ENCODE measurements at regions of chr5 and their contacts with region 1.

Region 1: DNA sequence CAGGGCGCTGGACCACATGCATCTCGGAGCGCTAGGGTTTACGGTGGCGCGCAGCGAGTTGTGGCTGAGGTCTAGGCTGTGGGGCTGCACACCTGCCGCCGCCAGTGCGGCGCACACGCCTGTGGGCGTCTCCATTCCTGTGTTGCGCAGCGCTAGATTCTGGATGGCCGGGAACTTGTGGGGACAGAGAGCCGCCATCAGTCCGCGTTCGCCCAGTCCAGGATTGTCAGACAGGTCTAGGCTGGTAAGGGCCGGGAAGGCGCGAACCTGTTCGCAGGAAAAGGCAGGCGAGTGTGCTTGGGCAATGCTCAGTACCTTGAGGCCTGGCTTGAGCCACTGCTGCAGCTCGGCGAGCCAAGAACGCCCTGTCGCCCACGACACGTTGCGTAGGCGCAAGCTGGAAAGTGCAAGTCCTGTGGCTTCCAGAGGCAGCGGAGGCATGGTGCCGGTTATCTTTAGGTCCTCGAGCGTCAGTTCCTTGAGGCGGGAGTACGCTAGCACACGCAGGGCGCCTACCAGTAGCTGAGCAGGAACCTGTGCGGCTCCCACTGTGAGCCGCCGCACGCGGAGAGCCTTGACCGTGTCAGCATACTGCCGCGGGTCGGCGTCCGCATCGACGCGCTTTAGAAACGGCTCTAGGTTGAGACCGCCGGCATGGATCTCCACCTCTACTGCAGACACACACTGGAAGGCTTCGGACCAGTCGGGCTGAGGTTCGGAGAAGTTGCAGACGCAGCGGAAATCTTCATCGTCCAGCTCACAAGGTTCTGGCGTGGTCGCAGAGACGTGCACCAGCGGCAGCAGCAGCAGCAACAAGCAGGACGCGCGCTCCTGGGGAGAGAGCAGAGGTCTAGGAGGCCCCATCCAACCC is 590 bp downstream of the CD14 start:
- DNase-seq: peak; percentile 58 to 59
- H3K4me3 ChIP-seq: peak overlapping the region; percentile 49
- H3K4me3 Mint-ChIP-seq: peak overlapping the region; percentile 88
- H3K27ac Mint-ChIP-seq: peak overlapping the region; percentile 79
- H3K4me1 ChIP-seq: peaks cover 11% of the 10 kb centered on the region
- H3K4me1 Mint-ChIP-seq: peaks cover 7% of the 10 kb centered on the region
- H3K27me3 ChIP-seq: no peaks in the 10 kb centered on the region
- H3K27me3 Mint-ChIP-seq: no peaks in the 10 kb centered on the region
- CTCF ChIP-seq: no peak

Region 2: GRCh38 chr5:140469259-140469658 is 163.1 kb before region 1 on chr5:
- CTCF ChIA-PET with region 1: no interaction called
- POLR2A ChIA-PET with region 1: interaction called, 21 read pairs
- intact Hi-C with region 1: no loop called
- DNase-seq: no peak
- H3K4me3 ChIP-seq: no peak overlapping the region
- H3K4me3 Mint-ChIP-seq: no peak overlapping the region
- H3K27ac Mint-ChIP-seq: no peak overlapping the region
- H3K4me1 ChIP-seq: no peaks in the 10 kb centered on the region
- H3K4me1 Mint-ChIP-seq: no peaks in the 10 kb centered on the region
- H3K27me3 ChIP-seq: no peaks in the 10 kb centered on the region
- H3K27me3 Mint-ChIP-seq: no peaks in the 10 kb centered on the region
- CTCF ChIP-seq: no peak

Region 3: GRCh38 chr5:140547508-140548299 is 84.7 kb before region 1 on chr5 and contains the start of gene EIF4EBP3:
- CTCF ChIA-PET with region 1: interaction called, 5 read pairs
- POLR2A ChIA-PET with region 1: no interaction called
- intact Hi-C with region 1: loop called (anchors 1 kb)
- DNase-seq: peak; percentile 97
- H3K4me3 ChIP-seq: peak within 1 kb of the TSS; percentile 38
- H3K4me3 Mint-ChIP-seq: peak within 1 kb of the TSS; percentile 69
- H3K27ac Mint-ChIP-seq: peak within 1 kb of the TSS; percentile 88
- H3K4me1 ChIP-seq: peaks cover 13% of the 10 kb centered on the region
- H3K4me1 Mint-ChIP-seq: peaks cover 19% of the 10 kb centered on the region
- H3K27me3 ChIP-seq: no peaks in the 10 kb centered on the region
- H3K27me3 Mint-ChIP-seq: no peaks in the 10 kb centered on the region
- CTCF ChIP-seq: peak; percentile 37 to 48
- total RNA-seq, gene EIF4EBP3: 7.6 and 8.0 TPM in 2 replicates

Region 4: DNA sequence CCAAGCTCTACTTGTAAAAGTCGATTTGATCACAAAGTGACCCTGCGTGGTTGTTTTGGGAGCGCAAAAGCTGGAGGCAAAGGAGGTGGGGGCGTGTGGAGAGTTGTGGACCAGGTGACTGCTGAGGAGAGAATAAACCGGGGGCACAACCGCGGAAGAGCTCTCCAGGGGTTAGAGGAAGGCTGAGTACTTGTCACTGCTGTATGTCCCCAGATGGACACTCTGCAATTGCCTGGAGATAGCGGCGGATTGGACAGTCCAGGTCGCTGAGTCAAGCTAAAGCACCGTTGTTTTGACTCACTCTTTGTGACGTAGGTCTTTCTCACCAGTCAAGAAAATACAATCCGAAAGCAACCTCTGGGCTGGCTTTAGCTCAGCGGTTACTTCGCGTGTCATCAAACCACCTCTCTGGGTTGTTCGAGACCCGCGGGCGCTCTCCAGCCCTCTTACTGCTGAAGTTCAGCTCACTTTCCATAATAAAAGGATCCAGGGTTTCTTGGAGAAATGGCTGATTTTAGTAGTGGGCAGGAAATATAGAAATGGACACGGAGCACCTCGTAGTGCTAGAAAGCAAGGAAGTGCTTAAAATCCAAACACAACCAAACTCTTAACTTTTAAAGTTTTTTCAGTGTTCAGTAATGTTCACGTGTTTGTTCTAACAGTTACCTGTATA is 93.5 kb after region 1 on chr5:
- CTCF ChIA-PET with region 1: no interaction called
- POLR2A ChIA-PET with region 1: no interaction called
- intact Hi-C with region 1: no loop called
- DNase-seq: peak; percentile 84 to 87
- H3K4me3 ChIP-seq: peak overlapping the region; percentile 8
- H3K4me3 Mint-ChIP-seq: peak overlapping the region; percentile 74
- H3K27ac Mint-ChIP-seq: peak overlapping the region; percentile 89
- H3K4me1 ChIP-seq: no peaks in the 10 kb centered on the region
- H3K4me1 Mint-ChIP-seq: no peaks in the 10 kb centered on the region
- H3K27me3 ChIP-seq: no peaks in the 10 kb centered on the region
- H3K27me3 Mint-ChIP-seq: no peaks in the 10 kb centered on the region
- CTCF ChIP-seq: no peak

Region 5: DNA sequence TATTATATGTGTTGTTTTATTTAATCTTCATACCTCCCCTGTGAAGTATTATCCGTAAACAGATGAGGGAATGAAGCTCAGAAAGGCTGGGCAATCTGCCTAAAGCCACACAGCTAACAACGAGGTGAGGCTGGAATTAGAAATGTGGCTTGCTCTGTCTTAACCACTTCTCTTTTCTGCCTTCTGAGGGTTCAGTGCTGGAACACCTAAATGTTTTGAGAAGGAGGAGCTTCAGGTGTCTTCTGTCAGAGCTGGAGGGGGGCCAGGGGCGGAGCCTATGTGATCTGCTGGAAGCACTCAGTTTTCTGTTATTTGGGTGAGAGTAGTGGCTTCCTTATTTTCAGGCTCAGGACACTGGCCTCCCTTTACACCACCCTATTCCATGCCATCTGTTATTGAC is 1084.7 kb after region 1 on chr5:
- CTCF ChIA-PET with region 1: no interaction called
- POLR2A ChIA-PET with region 1: no interaction called
- intact Hi-C with region 1: no loop called
- DNase-seq: no peak
- H3K4me3 ChIP-seq: no peak overlapping the region
- H3K4me3 Mint-ChIP-seq: no peak overlapping the region
- H3K27ac Mint-ChIP-seq: no peak overlapping the region
- H3K4me1 ChIP-seq: peaks cover 40% of the 10 kb centered on the region
- H3K4me1 Mint-ChIP-seq: peaks cover 28% of the 10 kb centered on the region
- H3K27me3 ChIP-seq: no peaks in the 10 kb centered on the region
- H3K27me3 Mint-ChIP-seq: no peaks in the 10 kb centered on the region
- CTCF ChIP-seq: no peak